Head of caudate nucleus (tissue), 42 donors: ENCODE measurements at regions of chr2 and their contacts with region 1.

Region 1: DNA sequence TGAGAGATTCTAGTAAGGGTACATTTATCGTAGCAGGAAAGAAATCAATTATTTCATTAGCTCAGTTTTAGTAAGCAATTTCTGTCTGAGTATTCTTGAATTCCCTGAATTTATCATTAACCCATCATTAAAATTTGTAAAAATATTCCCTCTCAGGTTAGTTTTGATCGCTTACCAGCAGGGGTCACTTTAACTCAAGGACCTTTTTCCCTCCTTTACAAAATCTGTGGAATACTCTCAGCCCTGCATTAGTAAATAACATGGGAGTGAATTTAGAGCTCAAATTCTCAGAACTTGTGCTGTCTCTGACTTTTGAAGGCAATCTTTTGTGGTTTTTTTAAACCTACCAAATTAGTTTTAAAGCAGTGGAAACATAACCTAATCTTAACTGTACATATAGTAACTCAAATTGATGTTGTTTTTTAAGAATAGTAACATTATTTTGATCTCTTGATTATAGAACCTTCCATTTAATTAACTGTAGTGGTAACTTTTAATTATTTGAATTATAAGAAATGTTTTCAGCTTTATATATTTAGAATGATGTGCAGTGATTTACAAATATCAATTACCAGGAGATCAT is 97.2 kb downstream of the AGPS start:
- DNase-seq: peak in 2 of 42 donors; percentile 20 to 29

Region 2: DNA sequence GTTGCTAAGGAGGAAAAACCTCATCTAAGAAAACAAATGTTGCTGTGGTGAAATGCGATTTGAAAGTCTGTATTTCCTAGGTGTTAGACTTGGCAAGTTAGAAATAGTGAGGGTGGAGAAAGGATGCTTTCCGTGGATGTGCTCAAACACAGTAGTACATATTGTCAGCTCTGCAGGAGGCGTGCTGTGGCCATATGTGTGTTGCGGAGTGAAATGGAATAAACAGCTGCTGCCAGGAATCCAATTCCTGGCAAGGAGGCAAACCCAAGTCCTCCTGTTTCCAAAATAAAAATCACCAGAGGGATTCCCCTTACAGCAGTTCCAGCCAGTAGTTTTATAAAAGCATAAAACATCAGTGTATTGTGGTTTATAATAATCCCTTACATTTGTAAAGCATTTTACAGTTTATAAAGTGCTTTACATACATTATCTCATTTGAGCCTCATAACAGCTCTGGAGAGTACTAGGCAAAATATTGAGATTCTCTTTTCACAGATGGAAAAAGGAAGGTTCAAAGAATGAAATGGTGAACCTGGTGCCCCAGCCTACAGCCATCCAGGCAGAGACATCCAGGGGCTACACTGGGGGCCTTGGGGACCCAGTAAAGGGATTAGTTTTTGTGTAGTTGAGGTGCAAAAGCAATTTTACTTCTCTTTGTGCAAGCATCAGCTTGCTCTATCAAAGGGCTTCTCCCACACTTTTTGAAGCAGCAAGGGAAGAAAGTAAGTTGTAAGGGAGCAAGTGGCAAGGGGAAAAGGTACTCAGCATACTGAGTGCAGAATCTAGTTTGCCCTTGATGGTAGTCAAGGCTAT is 108.7 kb after region 1 on chr2:
- intact Hi-C with region 1: loop called (anchors 10 kb)
- DNase-seq: peak in 2 of 42 donors; percentile 2 to 20